Activated CD4-positive, alpha-beta T cell treated with anti-CD3 and anti-CD28 coated beads, Interleukin-2, amount 10 ng/mL, durations not matched to agents 24 days and 14 days (primary cell): ENCODE measurements at regions of chr1 and their contacts with region 1.

Region 1: GRCh38 chr1:235999259-235999925 is 65.5 kb downstream of the NID1 start:
- DNase-seq: peak; percentile 93
- H3K4me3 Mint-ChIP-seq: peak overlapping the region; percentile 75
- H3K27ac Mint-ChIP-seq: peak overlapping the region; percentile 97
- H3K4me1 Mint-ChIP-seq: peaks cover 62% of the 10 kb centered on the region
- H3K27me3 Mint-ChIP-seq: no peaks in the 10 kb centered on the region

Region 2: DNA sequence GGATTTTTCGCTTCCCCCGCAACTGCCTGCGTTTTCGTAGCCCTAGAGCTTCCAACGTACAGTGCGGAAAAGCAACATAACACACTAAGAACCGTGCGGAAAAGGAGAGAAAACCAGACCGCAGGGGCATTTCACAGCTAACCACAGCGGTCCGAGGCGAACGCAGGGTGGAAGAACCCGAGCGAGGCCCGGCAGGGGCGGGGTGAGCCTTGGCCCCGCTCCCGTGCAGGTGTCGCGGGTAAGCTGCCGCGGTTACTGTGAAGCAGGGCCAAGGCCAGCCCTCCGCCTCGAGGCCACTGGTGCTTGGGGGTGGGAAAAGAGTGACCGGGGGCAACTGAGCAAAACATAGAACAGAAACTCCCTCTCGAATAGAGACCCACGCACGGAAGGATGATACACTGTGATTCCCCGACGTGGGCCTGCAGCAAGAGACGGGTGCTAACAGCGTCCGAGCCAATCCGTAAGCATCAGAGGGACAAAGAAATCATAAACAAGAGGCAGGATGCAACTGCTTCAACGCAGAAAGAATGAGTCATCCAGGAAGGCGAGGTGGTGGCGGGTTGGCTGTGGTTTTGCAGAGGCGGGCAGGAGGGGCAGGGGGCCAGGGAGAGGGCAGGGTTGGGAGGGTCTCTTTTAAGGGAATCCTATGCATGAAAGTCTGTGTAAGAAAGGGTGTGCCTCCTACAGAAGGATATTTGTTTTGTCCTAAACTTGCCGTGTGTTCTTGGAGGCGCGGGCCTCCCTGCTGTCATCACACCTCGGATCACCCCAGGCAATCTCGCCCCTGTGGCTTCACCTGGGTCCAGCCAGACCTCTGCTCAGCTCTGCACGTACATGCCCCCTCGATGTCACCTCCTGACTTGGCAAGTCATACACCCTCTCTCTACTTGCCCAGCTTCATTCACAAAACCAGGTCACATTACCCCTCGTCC is 357.1 kb before region 1 on chr1:
- intact Hi-C with region 1: loop called (anchors 2 kb)
- DNase-seq: peak; percentile 93
- H3K4me3 Mint-ChIP-seq: peak overlapping the region; percentile 87
- H3K27ac Mint-ChIP-seq: peak overlapping the region; percentile 99
- H3K4me1 Mint-ChIP-seq: peaks cover 64% of the 10 kb centered on the region
- H3K27me3 Mint-ChIP-seq: peaks cover 23% of the 10 kb centered on the region

Region 3: GRCh38 chr1:235697508-235697907 is 301.9 kb before region 1 on chr1:
- intact Hi-C with region 1: loop called (anchors 1 kb)
- DNase-seq: no peak
- H3K4me3 Mint-ChIP-seq: peak overlapping the region; percentile 15
- H3K27ac Mint-ChIP-seq: peak overlapping the region; percentile 82
- H3K4me1 Mint-ChIP-seq: peaks cover 13% of the 10 kb centered on the region
- H3K27me3 Mint-ChIP-seq: no peaks in the 10 kb centered on the region

Region 4: DNA sequence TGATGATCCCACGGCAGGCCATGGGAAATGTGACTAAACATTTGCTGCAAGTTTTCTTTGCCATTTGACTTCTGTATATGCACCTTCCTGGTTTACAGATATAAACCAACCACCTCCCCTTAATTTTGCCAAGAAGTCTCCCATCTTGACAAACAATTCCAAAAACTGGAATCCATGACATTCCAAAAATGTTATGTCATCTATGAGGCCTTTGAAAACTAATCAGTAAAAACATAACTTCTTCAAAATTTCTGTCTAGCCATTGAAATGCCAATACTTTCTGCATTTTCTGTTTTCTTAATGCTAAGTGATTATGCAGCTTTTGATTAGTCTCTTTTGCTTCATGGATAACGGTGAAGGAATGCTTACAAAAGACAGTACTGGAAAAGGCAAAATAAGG is 216.8 kb before region 1 on chr1:
- intact Hi-C with region 1: no loop called
- DNase-seq: no peak
- H3K4me3 Mint-ChIP-seq: no peak overlapping the region
- H3K27ac Mint-ChIP-seq: no peak overlapping the region
- H3K4me1 Mint-ChIP-seq: no peaks in the 10 kb centered on the region
- H3K27me3 Mint-ChIP-seq: no peaks in the 10 kb centered on the region

Region 5: GRCh38 chr1:235855811-235856429 is 143.5 kb before region 1 on chr1:
- intact Hi-C with region 1: loop called (anchors 2 kb)
- DNase-seq: no peak
- H3K4me3 Mint-ChIP-seq: no peak overlapping the region
- H3K27ac Mint-ChIP-seq: peak overlapping the region; percentile 56
- H3K4me1 Mint-ChIP-seq: peaks cover 32% of the 10 kb centered on the region
- H3K27me3 Mint-ChIP-seq: no peaks in the 10 kb centered on the region

Region 6: DNA sequence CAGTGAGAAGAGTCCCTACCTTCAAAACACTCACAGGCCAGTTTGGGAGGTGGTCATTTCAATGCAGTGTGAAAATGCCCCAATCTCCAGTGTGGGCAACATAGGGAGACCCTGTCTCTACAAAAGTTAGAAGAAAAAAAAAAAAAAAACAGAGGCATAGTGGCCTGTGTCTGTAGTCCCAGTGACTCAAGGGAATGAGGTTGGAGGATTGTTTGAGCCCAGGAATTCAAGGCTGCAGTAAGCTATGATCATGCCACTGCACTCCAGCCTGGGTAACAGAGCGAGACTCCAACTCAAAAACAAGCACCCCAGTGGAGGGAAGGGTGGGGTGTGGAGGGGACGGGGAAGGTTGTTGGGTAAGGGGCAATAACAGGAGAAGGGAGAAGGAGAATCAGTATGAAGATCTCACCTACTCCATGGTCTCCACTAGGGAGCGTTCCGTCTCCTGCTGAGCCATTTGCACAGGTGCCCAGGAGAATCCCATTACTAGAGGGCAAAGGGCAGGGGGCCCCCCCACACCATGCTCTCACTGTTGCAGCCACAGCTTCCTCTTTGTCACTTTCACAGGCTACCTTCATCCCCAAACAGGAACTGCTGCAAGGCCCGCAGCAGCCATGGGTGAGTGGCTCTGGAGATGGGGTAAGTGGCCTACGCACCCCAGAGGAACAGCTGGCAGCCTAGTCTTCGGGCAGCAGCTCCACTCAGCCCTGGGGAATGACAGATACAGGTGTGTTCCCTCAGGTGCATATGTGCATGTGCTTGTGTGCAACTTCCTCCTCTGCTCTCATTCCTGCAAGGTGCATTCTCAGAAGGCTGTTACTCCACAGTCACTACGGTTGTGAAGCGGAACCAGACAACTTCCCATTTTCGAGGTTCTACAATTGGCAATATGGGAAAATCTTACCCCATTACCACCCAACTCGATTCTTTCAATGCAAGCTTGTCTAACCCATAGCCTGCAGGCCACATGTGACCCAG is 44.8 kb before region 1 on chr1:
- intact Hi-C with region 1: loop called (anchors 1 kb)
- DNase-seq: peak; percentile 78
- H3K4me3 Mint-ChIP-seq: no peak overlapping the region
- H3K27ac Mint-ChIP-seq: no peak overlapping the region
- H3K4me1 Mint-ChIP-seq: peaks cover 37% of the 10 kb centered on the region
- H3K27me3 Mint-ChIP-seq: peaks cover 2% of the 10 kb centered on the region

Region 7: GRCh38 chr1:235971571-235972310 is 27.7 kb before region 1 on chr1:
- intact Hi-C with region 1: loop called (anchors 2 kb)
- DNase-seq: peak; percentile 96
- H3K4me3 Mint-ChIP-seq: peak overlapping the region; percentile 77
- H3K27ac Mint-ChIP-seq: peak overlapping the region; percentile 85
- H3K4me1 Mint-ChIP-seq: peaks cover 16% of the 10 kb centered on the region
- H3K27me3 Mint-ChIP-seq: peaks cover 6% of the 10 kb centered on the region

Region 8: DNA sequence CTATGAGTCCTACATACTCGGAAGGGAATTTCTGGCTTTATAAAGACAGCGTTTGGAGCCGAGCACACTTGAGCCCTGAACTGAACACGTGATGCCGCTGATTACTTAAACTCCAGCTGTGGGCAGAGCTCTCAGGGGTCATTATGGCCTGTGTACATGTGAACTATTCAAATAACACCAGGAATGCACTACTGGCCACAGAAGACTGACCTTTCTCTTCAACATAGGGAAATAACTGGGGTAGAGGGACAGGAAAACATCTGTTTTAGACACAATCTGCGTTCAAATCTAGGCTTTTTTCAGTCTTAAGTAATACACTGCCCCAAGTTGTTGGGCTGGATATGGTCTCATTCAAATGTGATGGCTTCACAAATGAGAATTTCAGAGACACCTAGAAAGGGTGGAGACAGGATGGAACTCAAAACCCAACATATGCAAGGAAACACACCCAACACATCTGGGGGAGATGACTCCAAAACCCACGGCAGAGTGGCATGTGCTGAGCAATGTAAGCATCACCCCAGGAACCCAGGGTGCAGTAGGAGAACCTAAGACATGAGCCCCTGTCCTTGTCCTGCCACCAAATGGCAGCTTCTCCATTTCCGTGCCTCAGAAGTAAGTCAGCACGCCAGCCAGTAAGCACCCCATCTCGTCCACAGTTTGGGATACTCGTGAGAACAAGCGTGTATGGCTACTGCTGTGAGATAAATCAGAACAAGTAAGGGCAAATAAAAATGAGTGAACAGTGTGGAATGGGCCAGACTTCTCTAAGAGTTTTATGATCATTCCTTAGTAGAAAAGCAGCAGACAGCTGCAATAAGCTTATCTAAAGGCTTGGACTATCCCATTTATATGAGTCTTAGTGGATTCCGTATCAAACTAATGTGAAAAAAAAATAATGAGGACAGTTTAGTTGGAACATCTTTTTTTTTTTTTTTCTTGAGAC is 40.6 kb after region 1 on chr1:
- intact Hi-C with region 1: no loop called
- DNase-seq: no peak
- H3K4me3 Mint-ChIP-seq: no peak overlapping the region
- H3K27ac Mint-ChIP-seq: no peak overlapping the region
- H3K4me1 Mint-ChIP-seq: no peaks in the 10 kb centered on the region
- H3K27me3 Mint-ChIP-seq: peaks cover 28% of the 10 kb centered on the region

Region 9: DNA sequence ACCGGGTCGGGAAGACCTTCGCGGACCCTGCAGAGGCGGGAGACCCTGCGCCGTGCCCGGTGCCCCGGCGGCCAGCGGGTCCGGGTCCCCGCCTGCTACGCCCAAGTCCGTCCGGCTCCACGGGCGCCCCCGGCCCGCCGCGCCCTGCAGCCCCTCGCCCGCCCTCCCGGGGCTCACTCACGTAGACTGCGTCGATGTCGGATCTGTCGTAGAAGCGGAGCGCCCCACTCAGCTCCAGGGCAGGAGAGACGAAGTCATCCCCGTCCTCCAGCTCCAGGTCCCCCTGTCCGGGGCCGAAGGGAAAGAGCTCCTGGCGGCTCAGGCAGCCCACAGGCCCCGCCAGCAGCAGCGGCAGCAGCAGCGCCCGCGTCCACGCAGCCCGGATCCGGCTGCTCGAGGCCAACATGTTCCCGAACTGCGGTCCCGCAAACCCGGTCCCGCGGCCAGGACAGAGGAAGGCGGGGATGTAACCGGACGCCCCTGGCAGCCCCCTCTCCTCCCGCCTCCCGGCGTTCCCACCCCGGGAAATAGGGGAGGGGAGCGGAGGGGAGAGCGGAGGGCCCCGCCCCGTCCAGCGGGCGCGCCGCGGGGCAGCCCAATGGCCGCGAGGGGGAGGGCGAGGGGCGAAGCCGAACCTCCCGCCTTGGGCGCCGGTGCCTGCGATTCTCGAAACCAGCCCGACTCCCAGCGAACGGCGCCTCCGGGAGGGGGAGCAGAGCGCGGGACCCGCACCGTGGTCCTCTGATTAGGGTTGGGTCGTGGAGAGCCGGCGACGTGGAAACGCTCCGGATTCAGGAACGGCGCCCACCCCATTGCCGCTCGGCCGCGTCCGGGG is 65.5 kb after region 1 on chr1 and contains the start of gene NID1:
- intact Hi-C with region 1: loop called (anchors 5 kb)
- DNase-seq: peak; percentile 73
- H3K4me3 Mint-ChIP-seq: peak within 1 kb of the TSS; percentile 74
- H3K27ac Mint-ChIP-seq: no peak within 1 kb of the TSS
- H3K4me1 Mint-ChIP-seq: peaks cover 24% of the 10 kb centered on the region
- H3K27me3 Mint-ChIP-seq: peaks cover 56% of the 10 kb centered on the region
- total RNA-seq, gene NID1: 0.57 and 0.61 TPM in 2 replicates